GM12878 (cell line): ENCODE measurements at regions of chr11 and their contacts with region 1.

Region 1: GRCh38 chr11:72430741-72431570 is 3.4 kb downstream of the CLPB start:
- DNase-seq: no peak
- ATAC-seq: peak; percentile 63
- H3K4me3 ChIP-seq: no peak overlapping the region
- H3K27ac ChIP-seq: peak overlapping the region; percentile 24; the same call in 1 of the 2 replicates
- H3K4me1 ChIP-seq: peaks cover 12% of the 10 kb centered on the region
- H3K27me3 ChIP-seq: no peaks in the 10 kb centered on the region
- CTCF ChIP-seq: peak; percentile 79 to 94 (median 92)
- EP300 ChIP-seq: no peak
- POLR2A ChIP-seq: no peak
- RAD21 ChIP-seq: peak; percentile 89

Region 2: DNA sequence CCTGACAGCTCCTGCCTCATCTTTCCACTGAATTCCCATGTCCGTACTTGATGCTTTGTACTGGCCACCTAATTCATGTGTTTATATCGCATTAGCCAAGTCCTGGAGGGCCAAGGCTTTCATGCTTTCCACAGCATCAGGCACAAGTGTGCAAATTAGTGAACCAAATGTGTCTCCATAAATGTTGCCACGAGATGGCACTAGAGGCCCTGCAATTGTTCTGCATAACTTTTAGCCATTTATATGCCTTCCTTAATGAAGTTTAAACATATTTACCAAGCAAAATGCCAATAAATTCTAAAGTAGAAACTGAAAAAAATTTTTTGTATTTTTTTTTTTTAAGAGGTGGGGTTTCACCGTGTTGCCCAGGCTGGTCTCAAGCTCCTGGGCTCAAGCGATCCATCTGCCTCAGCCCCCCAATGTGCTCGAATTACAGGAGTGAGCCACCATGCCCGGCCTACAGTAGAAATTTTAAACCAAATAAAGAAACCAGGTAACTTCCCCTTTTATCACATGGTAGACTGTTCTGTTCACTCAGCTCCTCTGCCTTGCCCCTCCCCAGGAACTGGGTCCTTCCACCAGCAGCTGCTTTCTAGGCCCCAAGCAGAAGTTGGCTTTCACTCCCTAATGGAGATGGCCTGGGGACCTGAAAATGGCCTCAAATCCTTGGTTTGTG is 453.1 kb before region 1 on chr11:
- CTCF ChIA-PET with region 1: interaction called, 52 read pairs
- POLR2A ChIA-PET with region 1: no interaction called
- RAD21 ChIA-PET with region 1: interaction called, 11 read pairs
- SMC1A ChIA-PET with region 1: interaction called, 16 read pairs
- in situ Hi-C with region 1: no loop called
- intact Hi-C with region 1: no loop called
- DNase-seq: peak; percentile 30
- ATAC-seq: peak; percentile 92
- H3K4me3 ChIP-seq: no peak overlapping the region
- H3K27ac ChIP-seq: peak overlapping the region; percentile 13
- H3K4me1 ChIP-seq: peaks cover 10% of the 10 kb centered on the region
- H3K27me3 ChIP-seq: no peaks in the 10 kb centered on the region
- CTCF ChIP-seq: peak; percentile 45 to 77 (median 59); a peak in 5 of 6 replicates
- EP300 ChIP-seq: no peak
- POLR2A ChIP-seq: no peak
- RAD21 ChIP-seq: peak; percentile 85

Region 3: DNA sequence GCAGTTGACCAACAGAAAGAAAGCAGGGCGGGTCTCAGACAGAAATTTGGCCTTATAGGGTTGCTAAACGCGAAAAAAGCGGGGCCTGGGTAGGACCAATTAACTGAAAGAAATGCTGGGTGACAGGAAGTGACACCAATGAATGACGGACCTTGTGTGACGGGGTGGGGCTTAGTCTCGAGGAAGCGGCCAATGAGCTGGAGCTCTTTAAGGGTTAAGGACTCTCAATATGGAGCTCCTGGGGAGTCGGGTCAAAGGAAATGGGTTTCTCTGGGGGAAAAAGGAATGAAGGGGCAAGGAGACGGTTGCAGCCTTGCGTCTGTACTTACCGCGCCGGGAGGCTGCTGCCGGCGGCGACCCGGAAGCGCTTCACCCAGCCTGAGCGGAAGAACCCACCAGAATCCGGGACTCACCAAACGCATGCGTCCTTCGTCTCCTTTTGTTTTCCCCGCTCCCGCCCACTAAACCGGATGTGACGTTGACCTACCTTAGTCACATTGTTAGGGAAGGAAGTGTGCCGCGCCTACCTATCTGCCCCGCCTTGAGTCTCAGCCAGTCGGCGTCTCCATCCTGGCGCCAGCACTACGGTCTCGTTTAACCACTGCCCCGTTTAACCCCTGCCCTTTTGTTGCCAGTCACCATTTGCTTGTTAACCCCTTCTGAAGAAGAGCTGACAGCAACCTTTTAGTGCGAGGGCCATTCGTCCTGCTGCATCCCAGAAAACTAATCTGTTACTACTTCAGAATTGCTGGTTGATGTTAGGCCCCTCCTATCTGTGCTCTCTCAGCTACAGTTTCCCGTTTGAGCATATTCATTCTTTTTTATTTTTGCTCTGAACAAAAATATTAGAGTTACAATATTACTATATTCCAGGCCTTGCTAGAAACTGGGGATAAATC is 318.4 kb before region 1 on chr11 and contains the start of gene ANAPC15:
- CTCF ChIA-PET with region 1: interaction called, 12 read pairs
- POLR2A ChIA-PET with region 1: no interaction called
- RAD21 ChIA-PET with region 1: interaction called, 7 read pairs
- SMC1A ChIA-PET with region 1: interaction called, 3 read pairs
- in situ Hi-C with region 1: no loop called
- intact Hi-C with region 1: no loop called
- DNase-seq: peak; percentile 99
- ATAC-seq: peak; percentile 96
- H3K4me3 ChIP-seq: peak within 1 kb of the TSS; percentile 69
- H3K27ac ChIP-seq: peak within 1 kb of the TSS; percentile 99
- H3K4me1 ChIP-seq: peaks cover 7% of the 10 kb centered on the region
- H3K27me3 ChIP-seq: no peaks in the 10 kb centered on the region
- CTCF ChIP-seq: no peak
- EP300 ChIP-seq: no peak
- POLR2A ChIP-seq: peak; percentile 99
- RAD21 ChIP-seq: no peak
- polyA plus RNA-seq, gene ANAPC15: 230 to 372 TPM

Region 4: GRCh38 chr11:72238040-72238450 is 192.9 kb before region 1 on chr11:
- CTCF ChIA-PET with region 1: interaction called, 10 read pairs
- POLR2A ChIA-PET with region 1: no interaction called
- RAD21 ChIA-PET with region 1: interaction called, 6 read pairs
- SMC1A ChIA-PET with region 1: interaction called, 5 read pairs
- in situ Hi-C with region 1: no loop called
- intact Hi-C with region 1: loop called (anchors 2 kb)
- DNase-seq: no peak
- ATAC-seq: peak; percentile 76
- H3K4me3 ChIP-seq: no peak overlapping the region
- H3K27ac ChIP-seq: no peak overlapping the region
- H3K4me1 ChIP-seq: peaks cover 4% of the 10 kb centered on the region
- H3K27me3 ChIP-seq: peaks cover 5 to 11% of the 10 kb centered on the region in 2 experiments; a peak in 3 of 4 replicates
- CTCF ChIP-seq: peak; percentile 52 to 84 (median 74)
- EP300 ChIP-seq: no peak
- POLR2A ChIP-seq: 0 out of 2 replicates have a peak, but pooled peaks have one; percentile 16
- RAD21 ChIP-seq: peak; percentile 63

Region 5: DNA sequence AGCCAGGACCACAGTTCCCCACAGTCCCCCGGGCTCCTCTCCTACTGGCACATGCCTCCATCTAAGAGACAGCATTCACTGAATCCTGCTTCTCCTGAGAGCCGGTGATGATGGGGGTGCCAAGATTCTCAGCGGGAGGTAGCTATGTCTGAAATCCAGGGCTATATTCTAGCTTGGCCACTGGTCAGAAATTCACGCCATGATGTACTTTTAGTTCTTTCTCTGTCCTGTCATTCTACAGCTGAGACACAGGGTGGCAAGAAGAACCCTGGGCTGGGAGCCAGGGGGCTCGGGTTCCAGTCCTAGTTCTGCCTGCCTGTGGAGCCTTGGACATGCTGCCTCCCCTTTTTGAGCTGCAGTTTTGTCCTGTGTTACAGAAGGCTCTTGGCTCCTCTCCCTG is 127.8 kb before region 1 on chr11:
- CTCF ChIA-PET with region 1: interaction called, 16 read pairs
- POLR2A ChIA-PET with region 1: no interaction called
- RAD21 ChIA-PET with region 1: interaction called, 7 read pairs
- SMC1A ChIA-PET with region 1: interaction called, 4 read pairs
- in situ Hi-C with region 1: no loop called
- intact Hi-C with region 1: no loop called
- DNase-seq: no peak
- ATAC-seq: no peak
- H3K4me3 ChIP-seq: no peak overlapping the region
- H3K27ac ChIP-seq: no peak overlapping the region
- H3K4me1 ChIP-seq: no peaks in the 10 kb centered on the region
- H3K27me3 ChIP-seq: no peaks in the 10 kb centered on the region
- CTCF ChIP-seq: no peak
- EP300 ChIP-seq: no peak
- POLR2A ChIP-seq: no peak
- RAD21 ChIP-seq: no peak

Region 6: GRCh38 chr11:72391638-72392423 is 39.1 kb before region 1 on chr11:
- CTCF ChIA-PET with region 1: interaction called, 14 read pairs
- POLR2A ChIA-PET with region 1: no interaction called
- RAD21 ChIA-PET with region 1: no interaction called
- SMC1A ChIA-PET with region 1: interaction called, 6 read pairs
- in situ Hi-C with region 1: no loop called
- intact Hi-C with region 1: no loop called
- DNase-seq: peak; percentile 37
- ATAC-seq: peak; percentile 84
- H3K4me3 ChIP-seq: peak overlapping the region; percentile 7; the same call in 1 of the 2 replicates
- H3K27ac ChIP-seq: peak overlapping the region; percentile 55
- H3K4me1 ChIP-seq: peaks cover 40% of the 10 kb centered on the region
- H3K27me3 ChIP-seq: no peaks in the 10 kb centered on the region
- CTCF ChIP-seq: no peak
- EP300 ChIP-seq: no peak
- POLR2A ChIP-seq: no peak; the same call in 1 of the 2 replicates
- RAD21 ChIP-seq: no peak

Region 7: GRCh38 chr11:72493426-72494108 is 62.6 kb after region 1 on chr11:
- CTCF ChIA-PET with region 1: no interaction called
- POLR2A ChIA-PET with region 1: no interaction called
- RAD21 ChIA-PET with region 1: no interaction called
- SMC1A ChIA-PET with region 1: no interaction called
- in situ Hi-C with region 1: no loop called
- intact Hi-C with region 1: no loop called
- DNase-seq: no peak
- ATAC-seq: no peak
- H3K4me3 ChIP-seq: no peak overlapping the region
- H3K27ac ChIP-seq: no peak overlapping the region
- H3K4me1 ChIP-seq: no peaks in the 10 kb centered on the region
- H3K27me3 ChIP-seq: peaks cover 0 to 2% of the 10 kb centered on the region in 2 experiments; a peak in 2 of 4 replicates
- CTCF ChIP-seq: no peak
- EP300 ChIP-seq: no peak
- POLR2A ChIP-seq: no peak
- RAD21 ChIP-seq: no peak

Region 8: DNA sequence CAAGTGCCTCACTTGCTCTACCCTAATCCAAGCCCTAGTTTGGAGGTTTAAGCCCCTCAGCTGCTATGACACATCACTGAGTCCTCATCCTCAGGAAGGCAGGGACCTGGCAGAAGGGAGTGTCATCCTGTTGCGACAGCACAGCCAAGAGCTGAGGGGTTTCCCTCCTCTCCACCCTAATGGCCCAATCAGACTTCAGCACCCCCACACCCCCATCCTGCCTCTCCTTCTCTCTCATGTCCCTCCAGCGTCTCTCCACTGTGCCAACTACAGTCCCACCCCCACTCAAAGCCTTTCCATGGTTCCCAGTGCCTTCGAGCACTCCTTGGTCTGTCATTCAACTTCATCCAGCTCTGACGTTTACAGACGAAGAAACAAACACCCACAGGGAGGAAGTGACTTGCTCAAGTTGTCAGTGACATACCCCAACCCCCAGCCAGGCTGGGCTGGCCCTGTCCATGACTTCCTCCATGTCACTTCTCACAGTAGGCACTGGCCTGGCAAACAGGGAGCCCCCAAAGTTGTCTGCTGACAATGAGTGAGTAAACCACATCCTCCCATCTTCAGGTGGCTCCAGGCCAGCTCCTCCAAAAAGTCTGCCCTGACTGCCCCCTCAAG is 305.6 kb after region 1 on chr11:
- CTCF ChIA-PET with region 1: no interaction called
- POLR2A ChIA-PET with region 1: no interaction called
- RAD21 ChIA-PET with region 1: no interaction called
- SMC1A ChIA-PET with region 1: no interaction called
- in situ Hi-C with region 1: no loop called
- intact Hi-C with region 1: no loop called
- DNase-seq: no peak
- ATAC-seq: peak; percentile 26
- H3K4me3 ChIP-seq: peak overlapping the region; percentile 25
- H3K27ac ChIP-seq: peak overlapping the region; percentile 72
- H3K4me1 ChIP-seq: peaks cover 54% of the 10 kb centered on the region
- H3K27me3 ChIP-seq: no peaks in the 10 kb centered on the region
- CTCF ChIP-seq: no peak
- EP300 ChIP-seq: no peak
- POLR2A ChIP-seq: no peak
- RAD21 ChIP-seq: no peak

Region 9: GRCh38 chr11:72924568-72925190 is 493.7 kb after region 1 on chr11:
- CTCF ChIA-PET with region 1: no interaction called
- POLR2A ChIA-PET with region 1: no interaction called
- RAD21 ChIA-PET with region 1: no interaction called
- SMC1A ChIA-PET with region 1: no interaction called
- in situ Hi-C with region 1: no loop called
- intact Hi-C with region 1: no loop called
- DNase-seq: peak; percentile 13
- ATAC-seq: peak; percentile 65
- H3K4me3 ChIP-seq: no peak overlapping the region
- H3K27ac ChIP-seq: no peak overlapping the region
- H3K4me1 ChIP-seq: no peaks in the 10 kb centered on the region
- H3K27me3 ChIP-seq: no peaks in the 10 kb centered on the region
- CTCF ChIP-seq: peak; percentile 42 to 55 (median 43); a peak in 4 of 6 replicates
- EP300 ChIP-seq: no peak
- POLR2A ChIP-seq: no peak
- RAD21 ChIP-seq: peak; percentile 76

Region 10: GRCh38 chr11:73453562-73453961 is 1022.6 kb after region 1 on chr11:
- CTCF ChIA-PET with region 1: no interaction called
- POLR2A ChIA-PET with region 1: no interaction called
- RAD21 ChIA-PET with region 1: no interaction called
- SMC1A ChIA-PET with region 1: no interaction called
- in situ Hi-C with region 1: no loop called
- intact Hi-C with region 1: no loop called
- DNase-seq: no peak
- ATAC-seq: no peak
- H3K4me3 ChIP-seq: no peak overlapping the region
- H3K27ac ChIP-seq: no peak overlapping the region
- H3K4me1 ChIP-seq: no peaks in the 10 kb centered on the region
- H3K27me3 ChIP-seq: no peaks in the 10 kb centered on the region
- CTCF ChIP-seq: no peak
- EP300 ChIP-seq: no peak
- POLR2A ChIP-seq: no peak
- RAD21 ChIP-seq: no peak